Activated CD4-positive, alpha-beta memory T cell treated with anti-CD3 and anti-CD28 coated beads, Interleukin-2, amount 10 ng/mL, durations not matched to agents 7 days and 5 days (primary cell): ENCODE measurements at regions of chr1 and their contacts with region 1.

Region 1: GRCh38 chr1:153566440-153567379 is 1.1 kb upstream of the S100A2 start:
- DNase-seq: peak; percentile 92
- H3K4me3 Mint-ChIP-seq: peak overlapping the region; percentile 44
- H3K27ac Mint-ChIP-seq: peak overlapping the region; percentile 100
- H3K4me1 Mint-ChIP-seq: peaks cover 47% of the 10 kb centered on the region
- H3K27me3 Mint-ChIP-seq: no peaks in the 10 kb centered on the region

Region 2: DNA sequence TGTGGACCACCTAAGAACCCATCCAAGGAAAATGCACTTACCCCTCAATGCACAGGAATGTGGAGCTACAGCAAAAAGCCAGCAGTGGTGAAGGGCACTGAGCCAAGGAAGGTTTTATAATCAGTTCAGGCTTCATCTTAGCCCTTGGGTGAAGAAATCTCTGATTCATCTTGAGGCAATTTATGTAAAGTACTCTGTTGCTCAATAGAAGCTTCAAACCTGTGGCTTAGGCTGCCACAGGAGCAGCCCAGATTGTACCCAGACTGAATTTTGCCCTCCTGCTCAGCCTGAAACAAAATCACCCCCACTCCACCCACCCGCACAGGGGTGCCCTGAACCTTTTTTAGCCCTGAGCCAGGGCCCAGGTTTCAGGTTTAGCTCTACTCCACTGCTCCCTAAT is 191.2 kb before region 1 on chr1 and contains the start of gene S100A12:
- CTCF ChIA-PET with region 1: no interaction called
- POLR2A ChIA-PET with region 1: no interaction called
- DNase-seq: no peak
- H3K4me3 Mint-ChIP-seq: no peak within 1 kb of the TSS
- H3K27ac Mint-ChIP-seq: no peak within 1 kb of the TSS
- H3K4me1 Mint-ChIP-seq: no peaks in the 10 kb centered on the region
- H3K27me3 Mint-ChIP-seq: peaks cover 14% of the 10 kb centered on the region
- total RNA-seq, gene S100A12: not detected

Region 3: GRCh38 chr1:153545067-153546055 is 21.3 kb before region 1 on chr1 and contains the start of gene S100A4:
- CTCF ChIA-PET with region 1: interaction called, 26 read pairs
- POLR2A ChIA-PET with region 1: interaction called, 100 read pairs
- DNase-seq: peak; percentile 97
- H3K4me3 Mint-ChIP-seq: peak within 1 kb of the TSS; percentile 96
- H3K27ac Mint-ChIP-seq: peak within 1 kb of the TSS; percentile 98
- H3K4me1 Mint-ChIP-seq: peaks cover 90% of the 10 kb centered on the region
- H3K27me3 Mint-ChIP-seq: peaks cover 3% of the 10 kb centered on the region
- total RNA-seq, gene S100A4: 1,297 to 1,322 TPM

Region 4: DNA sequence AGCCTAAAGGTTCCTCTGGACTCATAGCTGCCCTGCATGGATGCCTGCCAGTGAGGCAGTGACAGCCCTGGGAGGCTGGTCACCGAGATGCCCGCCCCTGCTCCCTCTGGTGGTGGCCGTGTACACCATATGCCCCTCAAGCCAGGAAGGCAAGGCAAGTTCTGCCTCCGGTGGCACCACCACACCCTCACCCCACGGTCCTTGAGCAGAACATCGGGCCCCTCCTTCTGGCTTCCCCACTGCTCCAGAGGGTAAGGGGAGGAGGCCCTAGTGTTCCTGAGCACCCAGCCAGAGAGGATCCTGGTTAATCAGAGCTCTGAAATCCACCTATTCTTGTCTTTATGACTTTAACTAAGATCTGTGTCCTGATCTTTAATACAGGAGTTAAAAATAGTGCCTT is 51.0 kb after region 1 on chr1:
- CTCF ChIA-PET with region 1: interaction called, 42 read pairs
- POLR2A ChIA-PET with region 1: interaction called, 4 read pairs
- DNase-seq: peak; percentile 75
- H3K4me3 Mint-ChIP-seq: no peak overlapping the region
- H3K27ac Mint-ChIP-seq: no peak overlapping the region
- H3K4me1 Mint-ChIP-seq: peaks cover 4% of the 10 kb centered on the region
- H3K27me3 Mint-ChIP-seq: no peaks in the 10 kb centered on the region